Lower lobe of right lung (tissue), 2 donors: ENCODE measurements at regions of chr4 and their contacts with region 1.

Region 1: DNA sequence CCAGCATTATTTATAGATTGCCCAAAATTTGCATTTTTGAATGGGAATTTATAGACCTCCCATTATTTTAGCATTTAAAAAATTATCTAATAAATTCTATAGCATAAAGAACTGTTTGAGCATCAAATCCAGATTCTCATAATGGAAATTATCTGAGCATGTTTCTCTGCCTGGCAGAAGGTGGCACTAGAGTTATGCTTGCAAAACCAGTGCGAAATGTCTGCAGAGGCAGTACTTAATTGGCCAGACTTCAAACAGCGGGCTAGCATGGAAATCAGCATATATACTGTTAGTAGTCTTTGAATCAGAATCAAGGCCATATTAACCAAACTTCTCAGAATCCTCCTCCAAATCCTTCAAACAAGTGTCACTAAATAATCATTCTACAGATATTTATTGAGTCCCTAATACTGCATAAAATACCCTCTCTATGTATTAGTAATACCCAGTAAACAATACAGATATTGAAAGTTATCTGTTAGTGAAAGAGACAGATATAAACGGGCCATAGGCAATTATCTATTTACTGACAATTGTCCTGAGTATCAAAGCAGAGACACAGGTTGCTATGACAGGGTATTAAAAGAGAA is 78.7 kb upstream of the DCLK2 start:
- DNase-seq: no peak
- ATAC-seq: peak in 1 of 2 donors; percentile 49
- H3K4me3 ChIP-seq: no peak overlapping the region
- H3K27ac ChIP-seq: no peak overlapping the region
- H3K4me1 ChIP-seq: no peaks in the 10 kb centered on the region
- H3K27me3 ChIP-seq: no peaks in the 10 kb centered on the region
- CTCF ChIP-seq: peak; percentile 65

Region 2: DNA sequence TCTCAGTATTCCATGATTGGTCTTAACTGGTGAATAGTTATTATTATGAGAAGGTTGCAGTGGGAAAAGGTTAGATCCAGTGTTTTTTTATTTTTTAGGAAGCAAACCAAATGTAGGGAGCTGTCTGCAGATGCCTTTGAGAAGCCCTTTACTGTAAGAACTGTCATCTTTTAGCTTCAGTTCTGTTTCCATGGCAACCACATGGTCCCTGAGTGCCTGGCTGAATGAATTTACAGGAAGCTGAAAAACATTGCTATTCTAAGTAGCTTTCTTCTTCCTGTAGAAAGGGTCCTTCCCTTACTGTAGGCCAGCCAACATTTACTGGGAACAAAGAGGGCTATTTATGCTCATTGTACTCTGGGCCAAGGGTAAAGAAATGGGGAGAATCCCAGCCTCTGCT is 182.0 kb after region 1 on chr4:
- intact Hi-C with region 1: no loop called
- DNase-seq: no peak
- ATAC-seq: no peak
- H3K4me3 ChIP-seq: no peak overlapping the region
- H3K27ac ChIP-seq: no peak overlapping the region
- H3K4me1 ChIP-seq: peaks cover 1% of the 10 kb centered on the region
- H3K27me3 ChIP-seq: no peaks in the 10 kb centered on the region
- CTCF ChIP-seq: no peak

Region 3: DNA sequence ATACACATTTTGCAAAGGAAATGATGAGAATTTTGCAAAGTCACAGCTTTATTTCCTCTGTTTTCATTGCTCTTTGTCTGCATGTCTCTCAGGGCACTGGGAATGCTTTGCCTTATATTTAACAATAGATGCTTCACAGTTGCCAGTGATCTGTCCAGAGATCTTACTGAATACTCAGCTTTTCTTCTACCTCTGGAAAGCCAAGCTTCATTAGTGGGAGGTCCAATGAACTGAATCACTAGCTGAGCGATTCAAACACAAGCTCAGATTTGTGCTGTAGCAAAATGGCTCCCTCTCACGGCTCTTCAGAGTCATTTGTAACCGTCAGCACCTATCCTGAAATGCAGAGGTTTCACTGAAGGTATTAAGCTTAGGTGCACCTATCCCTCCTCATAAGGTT is 217.6 kb after region 1 on chr4:
- intact Hi-C with region 1: loop called (anchors 10 kb)
- DNase-seq: no peak
- ATAC-seq: no peak
- H3K4me3 ChIP-seq: no peak overlapping the region
- H3K27ac ChIP-seq: no peak overlapping the region
- H3K4me1 ChIP-seq: peaks cover 6% of the 10 kb centered on the region
- H3K27me3 ChIP-seq: no peaks in the 10 kb centered on the region
- CTCF ChIP-seq: no peak

Region 4: GRCh38 chr4:150867148-150867547 is 867.6 kb after region 1 on chr4:
- intact Hi-C with region 1: loop called (anchors 10 kb)
- DNase-seq: no peak
- ATAC-seq: peak; percentile 78 to 80
- H3K4me3 ChIP-seq: no peak overlapping the region
- H3K27ac ChIP-seq: no peak overlapping the region
- H3K4me1 ChIP-seq: no peaks in the 10 kb centered on the region
- H3K27me3 ChIP-seq: no peaks in the 10 kb centered on the region
- CTCF ChIP-seq: peak; percentile 62